ENCODE measurements at regions of chr9 and their contacts with region 1.

Region 1: GRCh38 chr9:112819635-112820496 is 69.3 kb downstream of the SNX30 start:
- DNase-seq: peak; percentile 53 to 75 (median 67)
- ATAC-seq: peak; percentile 93 to 96
- H3K4me3 ChIP-seq: no peak overlapping the region
- H3K27ac ChIP-seq: peak overlapping the region; percentile 67
- H3K4me1 ChIP-seq: peaks cover 2% of the 10 kb centered on the region
- H3K27me3 ChIP-seq: no peaks in the 10 kb centered on the region

Region 2: DNA sequence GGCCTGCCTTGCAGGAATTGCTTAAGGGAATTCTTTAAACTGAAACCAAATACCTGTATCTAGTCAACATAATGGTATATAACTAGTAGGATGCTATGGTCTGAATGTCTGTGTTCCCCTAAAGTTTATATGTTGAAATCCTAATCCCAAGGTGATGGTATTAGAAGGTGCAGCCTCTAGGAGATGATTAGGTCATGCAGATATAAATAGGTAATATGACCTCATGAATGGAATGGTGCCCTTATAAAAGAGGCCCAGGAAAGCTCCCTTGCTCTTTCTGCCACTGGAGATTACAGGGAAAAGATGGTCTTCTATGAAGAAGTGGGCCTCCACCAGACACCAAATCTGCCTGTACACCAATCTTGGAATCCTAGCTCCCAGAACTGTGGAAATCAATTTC is 340.6 kb before region 1 on chr9:
- intact Hi-C with region 1: loop called in 1 of 4 experiments (anchors 10 kb)
- DNase-seq: no peak
- ATAC-seq: no peak
- H3K4me3 ChIP-seq: no peak overlapping the region
- H3K27ac ChIP-seq: no peak overlapping the region
- H3K4me1 ChIP-seq: no peaks in the 10 kb centered on the region
- H3K27me3 ChIP-seq: no peaks in the 10 kb centered on the region

Measured in right cardiac atrium (tissue), 5 donors.